ENCODE measurements at regions of chr11 and their contacts with region 1.

Region 1: DNA sequence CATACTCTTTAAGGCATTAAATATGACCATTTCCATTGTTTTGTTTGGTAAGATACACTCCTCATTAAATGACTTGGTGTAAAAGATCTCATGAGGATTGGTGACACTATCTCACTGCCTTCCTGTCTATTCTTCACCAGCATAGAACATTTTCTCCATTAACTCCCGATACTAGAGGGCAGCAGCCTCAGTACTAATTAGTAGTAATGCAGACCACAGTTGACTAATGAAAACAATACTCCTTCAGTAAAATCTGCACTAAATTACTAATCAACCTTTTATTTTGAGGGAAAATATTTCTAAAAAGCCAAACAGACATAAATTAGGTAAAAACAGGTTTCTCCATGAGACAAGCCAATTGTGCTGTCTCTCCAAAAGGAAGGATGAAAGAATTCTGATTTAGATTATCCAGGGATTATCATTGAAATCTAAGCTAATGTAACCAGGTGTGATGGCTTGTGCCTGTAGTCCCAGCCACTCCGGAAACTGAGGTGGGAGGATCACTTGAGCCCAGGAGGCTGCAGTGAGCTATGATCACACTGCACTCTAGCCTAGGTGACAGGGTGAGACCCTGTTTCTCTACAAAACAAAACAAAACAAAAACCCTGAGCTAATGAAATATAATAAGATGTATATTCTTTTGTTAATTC is 9.4 kb downstream of the PGM2L1 start:
- DNase-seq: no peak
- H3K4me3 ChIP-seq: no peak overlapping the region
- CTCF ChIP-seq: peak; percentile 65

Region 2: DNA sequence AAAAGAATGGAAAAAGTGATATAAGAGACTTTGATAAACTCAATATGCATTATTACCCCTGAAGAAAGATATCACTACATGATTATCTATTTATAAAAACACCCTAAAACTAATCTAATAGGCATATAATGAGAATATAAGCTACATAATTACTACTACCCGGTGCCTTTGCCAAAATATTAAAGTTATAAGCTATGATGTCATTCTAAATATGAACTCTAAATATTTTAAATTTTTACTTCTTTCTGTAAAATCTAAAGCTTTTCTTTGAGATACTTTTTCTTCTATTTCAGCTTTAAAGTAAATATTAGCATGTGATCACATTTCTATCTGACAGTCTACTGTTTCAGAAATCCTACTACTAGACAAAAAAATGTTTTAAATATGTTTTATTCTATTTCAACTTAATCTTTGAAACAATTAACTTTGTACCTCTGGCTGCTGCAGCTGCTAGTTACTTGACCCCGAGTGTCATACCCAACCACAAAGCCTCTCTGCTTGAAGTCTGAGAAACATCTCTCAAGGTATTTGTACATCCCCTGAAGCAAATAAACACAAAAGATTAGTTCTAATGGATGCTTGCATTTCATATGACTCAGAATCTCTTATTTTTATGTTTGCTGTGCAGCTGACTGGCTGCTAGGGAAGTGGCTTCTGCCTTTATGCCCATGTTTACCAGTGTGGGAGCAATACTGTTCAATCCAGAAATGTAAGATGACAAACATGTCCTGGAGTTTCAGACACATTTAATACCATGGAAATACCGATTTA is 17.3 kb before region 1 on chr11:
- CTCF ChIA-PET with region 1: interaction called, 22 read pairs
- POLR2A ChIA-PET with region 1: interaction called, 3 read pairs
- DNase-seq: no peak
- H3K4me3 ChIP-seq: no peak overlapping the region
- CTCF ChIP-seq: no peak

Region 3: GRCh38 chr11:74418509-74418895 is 29.7 kb after region 1 on chr11:
- CTCF ChIA-PET with region 1: interaction called, 13 read pairs
- POLR2A ChIA-PET with region 1: no interaction called
- DNase-seq: no peak
- H3K4me3 ChIP-seq: no peak overlapping the region
- CTCF ChIP-seq: no peak

Region 4: DNA sequence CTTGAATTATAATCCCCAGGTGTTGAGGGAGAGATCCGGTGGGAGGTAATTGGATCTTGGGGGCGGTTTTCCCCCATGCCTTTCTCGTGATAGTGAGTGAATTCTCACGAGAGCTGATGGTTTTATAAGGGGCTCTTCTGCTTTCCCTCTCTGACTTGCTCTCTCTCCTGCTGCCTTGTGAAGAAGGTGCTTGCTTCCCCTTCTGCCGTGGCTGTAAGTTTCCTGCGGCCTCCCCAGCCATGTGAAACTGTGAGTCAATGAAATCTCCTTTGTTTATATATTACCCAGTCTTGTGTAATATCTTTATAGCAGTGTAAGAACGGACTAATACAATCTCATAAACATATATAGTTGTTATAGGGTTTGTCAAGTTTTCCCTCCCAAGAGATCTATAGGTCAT is 45.7 kb after region 1 on chr11:
- CTCF ChIA-PET with region 1: interaction called, 11 read pairs
- POLR2A ChIA-PET with region 1: no interaction called
- DNase-seq: no peak
- H3K4me3 ChIP-seq: no peak overlapping the region
- CTCF ChIP-seq: no peak

Measured in AG04449 (cell line).